ENCODE measurements at regions of chr19 and their contacts with region 1.

Region 1: GRCh38 chr19:45485305-45486077 is 11.4 kb downstream of the RTN2 start:
- DNase-seq: peak; percentile 100
- ATAC-seq: peak; percentile 96
- H3K4me3 Mint-ChIP-seq: peak overlapping the region; percentile 81
- H3K27ac Mint-ChIP-seq: peak overlapping the region; percentile 61; the same call in 1 of the 2 replicates
- H3K4me1 Mint-ChIP-seq: peaks cover 4% of the 10 kb centered on the region
- H3K27me3 Mint-ChIP-seq: peaks cover 5% of the 10 kb centered on the region; the same call in 1 of the 2 replicates
- CTCF ChIP-seq: peak; percentile 90

Region 2: DNA sequence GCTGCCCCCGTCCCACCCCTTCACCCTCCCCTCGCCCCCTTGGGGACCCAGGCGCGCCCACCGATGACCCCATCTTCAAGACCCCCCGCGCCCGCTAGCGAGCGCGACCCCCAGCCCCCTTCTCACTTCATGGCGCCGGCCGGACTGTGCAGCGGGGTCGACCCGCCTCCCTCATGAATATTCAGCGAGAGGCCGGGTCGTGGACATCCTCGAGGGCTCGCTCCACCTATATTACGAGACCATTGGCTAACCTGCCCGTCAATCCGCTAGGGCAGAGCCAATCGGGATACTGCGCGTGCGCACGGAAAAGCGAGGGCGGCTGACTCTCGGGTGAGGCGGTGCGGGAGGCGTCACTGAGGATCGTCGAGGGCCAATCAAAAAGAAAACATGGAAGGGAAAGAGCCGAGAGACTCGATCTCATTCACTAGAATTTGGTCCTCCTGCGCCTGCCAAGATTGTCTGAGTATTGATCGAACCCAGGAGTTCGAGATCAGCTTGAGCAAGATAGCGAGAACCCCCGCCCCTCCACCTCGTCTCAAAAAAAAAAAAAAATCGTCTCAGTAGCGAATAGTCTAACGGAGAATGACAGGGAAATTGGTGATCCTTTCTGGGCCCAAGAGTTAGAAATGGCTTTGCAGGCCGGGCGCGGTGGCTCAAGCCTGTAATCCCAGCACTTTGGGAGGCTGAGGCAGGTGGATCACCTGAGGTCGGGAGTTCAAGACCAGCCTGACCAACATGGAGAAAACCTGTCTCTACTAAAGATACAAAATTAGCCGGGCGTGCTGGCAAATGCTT is 114.9 kb before region 1 on chr19 and contains the start of gene ERCC2:
- CTCF ChIA-PET with region 1: interaction called, 14 read pairs
- POLR2A ChIA-PET with region 1: no interaction called
- DNase-seq: peak; percentile 100
- ATAC-seq: peak; percentile 97
- H3K4me3 Mint-ChIP-seq: peak within 1 kb of the TSS; percentile 90
- H3K27ac Mint-ChIP-seq: peak within 1 kb of the TSS; percentile 100
- H3K4me1 Mint-ChIP-seq: peaks cover 17% of the 10 kb centered on the region
- H3K27me3 Mint-ChIP-seq: no peaks in the 10 kb centered on the region
- CTCF ChIP-seq: no peak
- total RNA-seq, gene ERCC2: 102 to 113 TPM (median 109 TPM) in 3 replicates

Region 3: GRCh38 chr19:45405435-45406225 is 79.9 kb before region 1 on chr19:
- CTCF ChIA-PET with region 1: interaction called, 67 read pairs
- POLR2A ChIA-PET with region 1: no interaction called
- DNase-seq: peak; percentile 93
- ATAC-seq: peak; percentile 32
- H3K4me3 Mint-ChIP-seq: peak overlapping the region; percentile 96
- H3K27ac Mint-ChIP-seq: peak overlapping the region; percentile 99
- H3K4me1 Mint-ChIP-seq: peaks cover 23% of the 10 kb centered on the region
- H3K27me3 Mint-ChIP-seq: peaks cover 7% of the 10 kb centered on the region; the same call in 1 of the 2 replicates
- CTCF ChIP-seq: no peak

Region 4: GRCh38 chr19:45446320-45446763 is 39.1 kb before region 1 on chr19:
- CTCF ChIA-PET with region 1: interaction called, 325 read pairs
- POLR2A ChIA-PET with region 1: no interaction called
- DNase-seq: no peak
- ATAC-seq: no peak
- H3K4me3 Mint-ChIP-seq: no peak overlapping the region
- H3K27ac Mint-ChIP-seq: no peak overlapping the region
- H3K4me1 Mint-ChIP-seq: peaks cover 33% of the 10 kb centered on the region
- H3K27me3 Mint-ChIP-seq: peaks cover 63% of the 10 kb centered on the region
- CTCF ChIP-seq: no peak

Region 5: DNA sequence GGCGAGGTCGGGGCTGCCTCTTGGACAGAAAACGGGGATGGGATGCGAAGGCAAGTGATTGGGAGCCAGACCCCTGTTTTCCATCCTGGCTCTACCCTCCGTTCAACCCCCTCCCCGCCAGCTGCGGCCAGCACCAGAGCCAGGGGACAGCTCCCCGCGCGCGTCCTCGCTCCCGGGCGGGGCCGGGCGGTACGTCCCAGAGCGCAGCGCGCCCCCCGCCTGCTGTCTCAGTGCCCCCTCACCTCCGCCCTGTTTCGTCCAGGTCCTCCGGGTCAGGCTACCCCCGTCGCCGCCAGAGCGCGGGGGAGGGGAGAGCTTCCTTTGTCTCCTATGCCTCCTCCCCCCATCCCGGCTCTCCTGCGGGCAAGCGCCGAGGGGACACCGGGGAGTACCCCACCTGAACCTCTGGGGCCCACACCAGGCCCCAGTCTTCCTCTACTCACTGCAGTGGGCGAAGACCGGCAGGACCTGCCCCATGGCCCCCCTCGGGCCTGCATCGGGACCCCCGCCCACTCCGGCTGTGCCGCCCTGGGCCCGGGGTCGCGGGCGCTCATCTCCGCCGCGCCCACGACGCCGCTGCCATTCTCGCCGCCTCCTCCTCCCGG is 11.0 kb after region 1 on chr19:
- CTCF ChIA-PET with region 1: interaction called, 145 read pairs
- POLR2A ChIA-PET with region 1: interaction called, 7 read pairs
- DNase-seq: peak; percentile 84
- ATAC-seq: peak; percentile 1
- H3K4me3 Mint-ChIP-seq: peak overlapping the region; percentile 63
- H3K27ac Mint-ChIP-seq: no peak overlapping the region
- H3K4me1 Mint-ChIP-seq: peaks cover 43% of the 10 kb centered on the region
- H3K27me3 Mint-ChIP-seq: peaks cover 39% of the 10 kb centered on the region
- CTCF ChIP-seq: no peak

Region 6: GRCh38 chr19:45558399-45558878 is 72.9 kb after region 1 on chr19:
- CTCF ChIA-PET with region 1: interaction called, 25 read pairs
- POLR2A ChIA-PET with region 1: no interaction called
- DNase-seq: peak; percentile 78
- ATAC-seq: peak; percentile 89
- H3K4me3 Mint-ChIP-seq: no peak overlapping the region
- H3K27ac Mint-ChIP-seq: no peak overlapping the region
- H3K4me1 Mint-ChIP-seq: peaks cover 12% of the 10 kb centered on the region; the same call in 1 of the 2 replicates
- H3K27me3 Mint-ChIP-seq: no peaks in the 10 kb centered on the region
- CTCF ChIP-seq: no peak

Region 7: DNA sequence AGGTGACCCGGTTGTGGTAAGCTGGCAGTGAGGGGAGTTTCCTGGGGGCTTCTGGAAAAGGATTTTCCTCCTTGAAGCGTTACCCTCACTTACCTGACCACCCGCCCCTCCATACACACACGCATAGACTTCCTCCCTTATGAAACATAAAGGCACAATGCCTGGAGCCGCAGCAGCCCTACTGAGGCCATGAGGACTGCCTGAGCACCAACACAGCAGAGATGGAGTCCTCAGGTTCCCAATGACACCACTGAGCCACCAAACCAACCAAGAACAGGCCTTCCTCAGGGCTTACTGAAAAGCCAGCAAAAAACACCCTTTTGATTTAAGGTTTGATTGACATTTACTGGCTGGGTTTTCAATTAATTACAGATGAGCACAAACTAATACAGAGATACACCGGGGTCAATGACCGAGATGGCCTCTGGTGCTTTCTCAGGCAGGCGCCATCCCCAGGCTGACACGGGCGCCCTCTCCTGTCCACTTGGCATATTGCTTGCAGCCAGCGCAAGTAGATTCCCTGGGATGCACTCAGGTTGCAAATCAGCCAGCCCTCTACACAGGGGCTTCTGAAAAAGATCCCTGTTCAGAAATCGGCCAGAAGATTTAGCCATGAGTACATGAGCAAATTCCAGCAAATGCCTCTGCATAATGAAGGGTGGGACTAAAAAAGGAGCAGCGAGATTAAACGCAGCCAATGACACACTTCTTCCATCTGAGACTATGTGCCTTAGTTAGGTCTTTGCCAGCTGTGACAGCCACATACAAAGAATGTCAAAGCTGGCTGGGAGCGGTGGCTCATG is 84.3 kb after region 1 on chr19:
- CTCF ChIA-PET with region 1: no interaction called
- POLR2A ChIA-PET with region 1: no interaction called
- DNase-seq: peak; percentile 89
- ATAC-seq: peak; percentile 95
- H3K4me3 Mint-ChIP-seq: no peak overlapping the region
- H3K27ac Mint-ChIP-seq: no peak overlapping the region
- H3K4me1 Mint-ChIP-seq: peaks cover 3% of the 10 kb centered on the region
- H3K27me3 Mint-ChIP-seq: no peaks in the 10 kb centered on the region
- CTCF ChIP-seq: peak; percentile 69

Region 8: DNA sequence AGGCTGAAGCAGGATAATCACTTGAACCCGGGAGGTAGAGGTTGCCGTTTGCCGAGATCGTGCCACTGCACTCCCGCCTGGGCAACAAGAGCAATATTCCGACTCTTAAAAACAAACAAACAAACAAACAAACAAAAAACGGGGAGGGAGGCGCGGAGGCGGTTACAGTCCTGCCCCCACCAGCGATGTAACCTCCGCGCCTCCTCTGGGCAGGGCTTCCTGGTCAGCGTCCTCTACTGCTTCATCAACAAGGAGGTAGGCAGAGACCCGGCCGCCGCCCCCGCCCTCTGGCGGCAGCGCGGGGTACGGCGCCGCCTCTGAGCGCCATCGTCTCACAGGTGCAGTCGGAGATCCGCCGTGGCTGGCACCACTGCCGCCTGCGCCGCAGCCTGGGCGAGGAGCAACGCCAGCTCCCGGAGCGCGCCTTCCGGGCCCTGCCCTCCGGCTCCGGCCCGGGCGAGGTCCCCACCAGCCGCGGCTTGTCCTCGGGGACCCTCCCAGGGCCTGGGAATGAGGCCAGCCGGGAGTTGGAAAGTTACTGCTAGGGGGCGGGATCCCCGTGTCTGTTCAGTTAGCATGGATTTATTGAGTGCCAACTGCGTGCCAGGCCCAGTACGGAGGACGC is 196.0 kb after region 1 on chr19:
- CTCF ChIA-PET with region 1: interaction called, 25 read pairs
- POLR2A ChIA-PET with region 1: no interaction called
- DNase-seq: peak; percentile 93
- ATAC-seq: peak; percentile 53
- H3K4me3 Mint-ChIP-seq: peak overlapping the region; percentile 65
- H3K27ac Mint-ChIP-seq: no peak overlapping the region
- H3K4me1 Mint-ChIP-seq: peaks cover 14% of the 10 kb centered on the region
- H3K27me3 Mint-ChIP-seq: peaks cover 38% of the 10 kb centered on the region
- CTCF ChIP-seq: peak; percentile 96